ENCODE measurements at regions of chr1 and their contacts with region 1.

Region 1: GRCh38 chr1:16420424-16421118 is 16.7 kb downstream of the SPATA21 start:
- DNase-seq: peak in 1 of 5 donors; percentile 33
- ATAC-seq: no peak
- H3K4me3 ChIP-seq: no peak overlapping the region
- H3K27ac ChIP-seq: peak overlapping the region in 1 of 12 donors; percentile 49
- H3K4me1 ChIP-seq: no peaks in the 10 kb centered on the region
- H3K27me3 ChIP-seq: peaks cover 0 to 5% (median 0%) of the 10 kb centered on the region in 9 donors
- CTCF ChIP-seq: no peak
- POLR2A ChIP-seq: no peak

Region 2: GRCh38 chr1:16375521-16376359 is 44.8 kb before region 1 on chr1:
- intact Hi-C with region 1: loop called in 1 of 10 experiments (anchors 5 kb)
- DNase-seq: peak in 1 of 5 donors; percentile 47
- ATAC-seq: peak in 3 of 4 donors; percentile 52 to 63 (median 58)
- H3K4me3 ChIP-seq: peak overlapping the region in 2 of 12 donors; percentile 4 to 8
- H3K27ac ChIP-seq: peak overlapping the region; percentile 25 to 81 (median 72)
- H3K4me1 ChIP-seq: peaks cover 9 to 89% (median 66%) of the 10 kb centered on the region in 12 donors
- H3K27me3 ChIP-seq: no peaks in the 10 kb centered on the region
- CTCF ChIP-seq: no peak
- POLR2A ChIP-seq: no peak

Region 3: GRCh38 chr1:16459352-16459925 is 38.9 kb after region 1 on chr1:
- intact Hi-C with region 1: no loop called
- DNase-seq: no peak
- ATAC-seq: peak; percentile 50 to 66 (median 62)
- H3K4me3 ChIP-seq: no peak overlapping the region
- H3K27ac ChIP-seq: no peak overlapping the region
- H3K4me1 ChIP-seq: peaks cover 0 to 24% (median 7%) of the 10 kb centered on the region in 12 donors
- H3K27me3 ChIP-seq: no peaks in the 10 kb centered on the region
- CTCF ChIP-seq: no peak
- POLR2A ChIP-seq: no peak

Region 4: DNA sequence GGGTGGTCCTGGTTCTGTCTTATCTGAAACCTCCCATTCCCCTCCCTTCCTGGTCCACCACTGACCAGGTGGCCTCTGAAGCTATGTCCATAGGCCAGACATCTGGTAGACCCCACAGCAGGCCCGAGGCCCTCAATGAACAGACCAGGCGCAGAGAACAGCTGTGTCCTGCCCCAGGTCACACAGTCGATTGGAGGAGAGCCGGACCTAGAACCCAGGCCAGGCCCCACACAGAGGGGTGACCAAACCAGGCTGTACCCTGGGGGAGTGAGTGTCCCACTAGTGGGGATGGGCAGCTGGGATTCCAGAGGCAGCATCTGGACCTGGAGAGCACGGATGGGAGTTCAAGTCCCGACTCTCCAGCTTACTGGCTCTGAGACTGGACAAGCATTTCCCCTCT is 64.4 kb after region 1 on chr1:
- intact Hi-C with region 1: loop called in 1 of 10 experiments (anchors 10 kb)
- DNase-seq: no peak
- ATAC-seq: no peak
- H3K4me3 ChIP-seq: no peak overlapping the region
- H3K27ac ChIP-seq: no peak overlapping the region
- H3K4me1 ChIP-seq: no peaks in the 10 kb centered on the region
- H3K27me3 ChIP-seq: no peaks in the 10 kb centered on the region
- CTCF ChIP-seq: no peak
- POLR2A ChIP-seq: no peak

Measured in heart left ventricle (tissue), 16 donors.